Right ventricle myocardium inferior (tissue), 1 donor: ENCODE measurements at regions of chr15 and their contacts with region 1.

Region 1: GRCh38 chr15:90648137-90649070 is 68.7 kb upstream of the BLM start:
- DNase-seq: peak; percentile 85
- ATAC-seq: peak; percentile 81

Region 2: GRCh38 chr15:89978914-89979313 is 669.5 kb before region 1 on chr15:
- intact Hi-C with region 1: no loop called
- DNase-seq: no peak
- ATAC-seq: no peak

Region 3: DNA sequence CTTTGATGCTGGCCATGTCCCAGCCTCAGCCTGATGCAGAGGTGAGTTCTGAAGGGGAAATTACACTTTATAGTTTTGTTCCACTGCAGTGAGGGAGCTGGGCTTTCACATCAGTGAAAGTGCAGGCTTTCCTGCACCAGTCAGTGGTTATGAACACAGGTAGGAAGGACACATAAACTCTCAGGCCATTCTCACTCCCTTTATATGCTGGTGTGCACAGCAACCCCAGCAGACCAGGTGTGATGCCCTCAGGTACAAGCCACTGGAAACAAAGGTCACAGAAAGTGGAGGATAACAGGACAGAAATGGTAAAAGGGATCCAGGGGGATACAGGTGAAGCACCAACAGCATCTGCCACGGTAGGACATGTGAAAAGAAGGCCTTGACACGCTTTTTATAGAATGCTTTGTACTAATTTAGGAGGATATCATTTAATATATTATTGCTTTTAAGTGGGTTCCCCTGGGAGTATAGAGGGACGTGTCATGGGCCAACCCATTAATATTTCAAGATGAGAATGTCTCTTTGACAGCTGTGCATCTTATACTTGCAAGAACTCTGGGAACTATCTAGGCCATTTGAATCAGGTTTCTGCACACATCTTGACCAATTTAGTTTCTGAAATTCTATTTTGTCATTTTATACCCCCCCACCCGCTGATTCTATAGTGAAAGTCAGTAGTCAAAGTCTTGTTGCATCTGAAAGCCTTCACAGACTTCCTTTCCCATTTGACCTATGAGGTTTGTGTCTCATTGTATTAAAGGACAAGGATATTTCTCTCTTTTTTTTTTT is 43.8 kb after region 1 on chr15:
- intact Hi-C with region 1: loop called (anchors 1 kb)
- DNase-seq: no peak
- ATAC-seq: no peak